Right cardiac atrium (tissue), 5 donors: ENCODE measurements at regions of chr19 and their contacts with region 1.

Region 1: GRCh38 chr19:2236314-2237050 is at the starts of genes PLEKHJ1 and SF3A2:
- DNase-seq: peak; percentile 98 to 99 (median 98)
- ATAC-seq: peak; percentile 90 to 94
- H3K4me3 ChIP-seq: peak within 1 kb of the TSS; percentile 92
- H3K27ac ChIP-seq: peak within 1 kb of the TSS; percentile 97
- H3K4me1 ChIP-seq: peaks cover 21% of the 10 kb centered on the region
- H3K27me3 ChIP-seq: no peaks in the 10 kb centered on the region
- total RNA-seq, gene PLEKHJ1: 39.9 to 51.8 (median 45.8) TPM
- total RNA-seq, gene SF3A2: 30.0 to 34.9 (median 33.1) TPM

Region 2: GRCh38 chr19:2150794-2151338 is 85.6 kb before region 1 on chr19:
- intact Hi-C with region 1: no loop called
- DNase-seq: peak in 2 of 3 donors; percentile 73 to 75
- ATAC-seq: no peak
- H3K4me3 ChIP-seq: peak overlapping the region; percentile 64
- H3K27ac ChIP-seq: peak overlapping the region; percentile 19
- H3K4me1 ChIP-seq: peaks cover 6% of the 10 kb centered on the region
- H3K27me3 ChIP-seq: no peaks in the 10 kb centered on the region

Region 3: DNA sequence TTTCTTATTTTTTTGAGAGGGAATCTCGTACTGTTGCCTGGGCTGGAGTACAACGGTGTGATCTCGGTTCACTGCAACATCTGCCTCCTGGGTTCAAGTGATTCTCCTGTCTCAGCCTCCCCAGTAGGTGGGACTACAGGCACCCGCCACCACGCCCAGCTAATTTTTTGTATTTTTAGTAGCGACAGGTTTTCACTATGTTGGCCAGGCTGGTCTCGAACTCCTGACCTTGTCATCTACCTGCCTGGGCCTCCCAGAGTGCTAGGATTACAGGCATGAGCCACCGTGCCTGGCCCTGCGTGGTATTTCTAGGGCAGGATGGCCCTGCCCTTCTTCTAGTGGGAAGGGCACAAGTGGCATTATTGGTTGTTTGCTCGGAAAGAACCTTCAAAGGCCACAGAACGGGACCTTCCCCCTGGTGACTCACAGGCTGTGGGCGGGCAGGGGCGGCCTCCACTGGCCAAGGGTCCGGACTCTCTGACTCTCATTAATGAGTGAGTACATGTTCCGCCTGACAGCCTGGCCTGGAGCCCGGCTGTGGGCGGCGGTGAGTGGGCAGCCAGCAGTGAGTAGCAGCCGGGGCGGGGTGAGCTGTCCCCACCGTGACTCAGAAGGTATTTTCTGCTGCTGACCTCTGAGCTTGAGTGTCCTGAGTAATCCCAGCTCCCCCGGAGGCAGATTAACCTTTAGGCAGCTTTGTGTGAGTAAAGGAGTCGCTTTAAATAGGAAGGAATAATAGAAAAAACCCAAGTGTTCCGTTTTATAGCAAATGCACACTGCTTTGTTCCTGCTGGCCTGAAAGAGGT is 67.7 kb before region 1 on chr19:
- intact Hi-C with region 1: loop called in 2 of 4 experiments (anchors 5 to 10 kb)
- DNase-seq: peak; percentile 98 to 99 (median 98)
- ATAC-seq: peak; percentile 93
- H3K4me3 ChIP-seq: no peak overlapping the region
- H3K27ac ChIP-seq: peak overlapping the region; percentile 94
- H3K4me1 ChIP-seq: peaks cover 7% of the 10 kb centered on the region
- H3K27me3 ChIP-seq: no peaks in the 10 kb centered on the region

Region 4: GRCh38 chr19:2273356-2274184 is 37.1 kb after region 1 on chr19:
- intact Hi-C with region 1: loop called in 3 of 4 experiments (anchors 5 kb)
- DNase-seq: peak; percentile 80 to 93 (median 92)
- ATAC-seq: peak; percentile 7 to 17
- H3K4me3 ChIP-seq: no peak overlapping the region
- H3K27ac ChIP-seq: peak overlapping the region; percentile 26
- H3K4me1 ChIP-seq: peaks cover 2% of the 10 kb centered on the region
- H3K27me3 ChIP-seq: no peaks in the 10 kb centered on the region

Region 5: GRCh38 chr19:2315818-2316353 is 79.4 kb after region 1 on chr19:
- intact Hi-C with region 1: loop called in 2 of 4 experiments (anchors 10 kb)
- DNase-seq: peak; percentile 69 to 89 (median 89)
- ATAC-seq: peak; percentile 83 to 84
- H3K4me3 ChIP-seq: no peak overlapping the region
- H3K27ac ChIP-seq: no peak overlapping the region
- H3K4me1 ChIP-seq: no peaks in the 10 kb centered on the region
- H3K27me3 ChIP-seq: no peaks in the 10 kb centered on the region

Region 6: DNA sequence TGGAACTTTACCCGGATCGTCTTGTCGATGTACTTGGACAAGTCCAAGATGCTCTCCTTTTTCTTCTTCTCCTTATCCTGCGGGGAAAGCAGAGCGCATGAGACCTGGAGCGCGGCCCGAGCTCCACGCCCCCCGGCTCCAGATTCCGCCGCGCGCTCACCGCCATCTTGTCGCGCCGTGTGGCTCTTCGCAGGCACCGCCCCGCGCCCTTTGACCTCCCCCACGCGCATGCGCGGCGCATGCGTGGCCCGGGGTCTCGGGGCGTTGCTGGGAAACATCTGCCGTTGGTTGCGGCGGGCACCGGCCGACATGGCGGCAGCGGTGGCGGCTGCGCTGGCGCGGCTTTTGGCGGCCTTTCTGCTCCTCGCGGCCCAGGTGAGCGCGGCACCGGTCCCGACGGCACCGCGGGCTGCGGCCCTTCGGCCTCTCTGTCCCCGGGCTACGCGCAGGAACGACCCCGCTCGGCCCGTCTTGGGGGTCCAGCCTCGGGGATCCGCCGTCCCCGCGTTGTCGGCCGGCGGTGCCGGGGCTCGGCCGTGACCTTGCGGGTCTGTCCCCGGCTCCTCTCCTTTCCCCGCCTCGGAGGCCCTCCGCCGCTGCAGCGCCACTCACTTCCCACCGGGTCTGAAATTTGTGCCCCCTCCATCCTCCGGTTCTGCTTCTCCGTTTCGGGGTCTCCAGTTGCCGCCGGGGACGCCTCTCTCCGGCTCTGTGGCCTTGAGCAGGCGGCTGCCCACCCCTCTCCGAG is 92.1 kb after region 1 on chr19 and contains the starts of genes LSM7 and SPPL2B:
- intact Hi-C with region 1: loop called in 1 of 4 experiments (anchors 5 kb)
- DNase-seq: peak; percentile 91 to 97 (median 97)
- ATAC-seq: peak; percentile 92 to 93
- H3K4me3 ChIP-seq: peak within 1 kb of the TSS; percentile 88
- H3K27ac ChIP-seq: peak within 1 kb of the TSS; percentile 46
- H3K4me1 ChIP-seq: peaks cover 5% of the 10 kb centered on the region
- H3K27me3 ChIP-seq: no peaks in the 10 kb centered on the region
- total RNA-seq, gene LSM7: 33.0 to 49.9 (median 41.4) TPM
- total RNA-seq, gene SPPL2B: 27.1 to 40.2 (median 31.8) TPM

Region 7: DNA sequence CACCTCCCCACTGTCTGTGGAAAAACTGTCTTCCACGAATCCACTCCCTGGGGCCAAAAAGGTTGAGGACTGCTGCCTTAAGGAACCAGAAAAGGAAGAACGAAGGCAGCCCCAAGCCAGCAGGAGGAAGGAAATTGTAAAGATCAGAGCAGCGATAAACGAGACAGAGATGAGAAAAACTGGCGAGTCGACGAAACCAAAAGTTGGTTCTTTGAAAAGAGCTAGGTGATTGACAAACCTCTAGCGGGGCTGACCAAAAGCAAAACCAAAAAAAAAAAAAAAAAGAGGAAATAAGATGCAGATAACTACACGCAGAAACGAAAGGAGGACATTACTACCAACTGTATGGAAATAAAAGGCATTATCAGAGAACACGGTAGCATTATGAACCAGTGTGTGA is 316.4 kb after region 1 on chr19:
- intact Hi-C with region 1: no loop called
- DNase-seq: peak in 2 of 3 donors; percentile 25 to 34
- ATAC-seq: no peak
- H3K4me3 ChIP-seq: no peak overlapping the region
- H3K27ac ChIP-seq: no peak overlapping the region
- H3K4me1 ChIP-seq: no peaks in the 10 kb centered on the region
- H3K27me3 ChIP-seq: no peaks in the 10 kb centered on the region